Activated T-helper 2 cell treated with anti-CD3 and anti-CD28 coated beads, Interferon-gamma antibody, Interleukin-2, Interleukin-4, amounts not matched to agents 10 μg/mL and 5 μg/mL and 100 μg/mL, durations not matched to agents 14 hours and 24 hours and 36 hours (primary cell): ENCODE measurements at regions of chr7 and their contacts with region 1.

Region 1: GRCh38 chr7:93245525-93246432 is 13.6 kb downstream of the VPS50 start:
- DNase-seq: no peak
- H3K4me3 Mint-ChIP-seq: no peak overlapping the region
- H3K27ac Mint-ChIP-seq: no peak overlapping the region
- H3K4me1 Mint-ChIP-seq: no peaks in the 10 kb centered on the region
- H3K27me3 Mint-ChIP-seq: no peaks in the 10 kb centered on the region

Region 2: DNA sequence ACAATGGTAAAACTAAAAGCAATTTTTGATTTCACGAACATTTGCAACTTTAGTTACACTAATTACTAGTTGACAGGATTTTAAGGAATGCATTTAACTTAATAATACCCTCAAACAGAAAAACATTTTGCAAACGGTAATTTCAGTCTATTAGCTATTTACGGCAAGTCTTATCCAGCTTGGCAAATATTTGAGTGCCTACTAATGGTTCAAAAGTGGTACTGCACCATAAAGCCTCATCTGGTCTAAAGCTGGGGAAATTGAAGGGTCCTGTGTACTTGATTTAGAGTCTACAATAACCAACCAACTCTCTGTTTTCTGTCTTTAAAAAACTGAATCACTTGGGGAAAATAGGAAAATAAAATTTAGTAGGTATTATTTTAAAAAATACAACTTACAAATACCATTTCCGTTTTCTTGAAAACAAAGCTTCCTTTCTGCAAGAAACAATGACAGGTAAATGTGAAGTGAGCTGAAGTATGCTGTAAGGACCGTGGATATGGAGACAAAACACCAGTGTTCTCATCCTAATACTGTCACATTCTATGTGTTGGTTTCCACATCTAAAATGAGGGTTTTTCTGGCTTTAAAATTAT is 128.7 kb after region 1 on chr7:
- intact Hi-C with region 1: loop called (anchors 5 kb)
- DNase-seq: no peak
- H3K4me3 Mint-ChIP-seq: no peak overlapping the region
- H3K27ac Mint-ChIP-seq: no peak overlapping the region
- H3K4me1 Mint-ChIP-seq: no peaks in the 10 kb centered on the region
- H3K27me3 Mint-ChIP-seq: peaks cover 16% of the 10 kb centered on the region

Region 3: GRCh38 chr7:93390660-93391059 is 144.9 kb after region 1 on chr7:
- intact Hi-C with region 1: no loop called
- DNase-seq: no peak
- H3K4me3 Mint-ChIP-seq: no peak overlapping the region
- H3K27ac Mint-ChIP-seq: no peak overlapping the region
- H3K4me1 Mint-ChIP-seq: peaks cover 7% of the 10 kb centered on the region
- H3K27me3 Mint-ChIP-seq: peaks cover 10% of the 10 kb centered on the region

Region 4: GRCh38 chr7:93442478-93443224 is 196.9 kb after region 1 on chr7:
- intact Hi-C with region 1: loop called (anchors 5 kb)
- DNase-seq: peak; percentile 14
- H3K4me3 Mint-ChIP-seq: no peak overlapping the region
- H3K27ac Mint-ChIP-seq: no peak overlapping the region
- H3K4me1 Mint-ChIP-seq: no peaks in the 10 kb centered on the region
- H3K27me3 Mint-ChIP-seq: no peaks in the 10 kb centered on the region

Region 5: DNA sequence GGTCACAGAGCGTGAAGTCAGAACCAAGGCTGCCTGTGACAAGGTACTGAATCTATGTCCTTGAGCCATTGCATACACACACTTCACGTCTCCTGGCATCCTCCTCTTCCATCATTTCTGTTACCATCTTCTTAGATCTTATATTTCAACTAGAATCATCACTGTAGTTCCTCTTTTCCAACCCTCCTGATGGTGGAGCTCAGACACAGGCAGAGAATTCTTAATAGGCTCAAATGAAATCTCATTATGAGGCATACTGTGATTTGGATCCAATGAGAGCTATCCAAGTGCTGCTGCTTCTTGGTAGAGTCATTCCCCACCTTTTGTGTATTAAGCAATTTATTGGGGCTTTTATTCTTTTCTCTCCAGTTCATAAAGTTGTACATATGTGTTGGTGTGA is 215.6 kb after region 1 on chr7:
- intact Hi-C with region 1: no loop called
- DNase-seq: no peak
- H3K4me3 Mint-ChIP-seq: no peak overlapping the region
- H3K27ac Mint-ChIP-seq: no peak overlapping the region
- H3K4me1 Mint-ChIP-seq: no peaks in the 10 kb centered on the region
- H3K27me3 Mint-ChIP-seq: no peaks in the 10 kb centered on the region

Region 6: DNA sequence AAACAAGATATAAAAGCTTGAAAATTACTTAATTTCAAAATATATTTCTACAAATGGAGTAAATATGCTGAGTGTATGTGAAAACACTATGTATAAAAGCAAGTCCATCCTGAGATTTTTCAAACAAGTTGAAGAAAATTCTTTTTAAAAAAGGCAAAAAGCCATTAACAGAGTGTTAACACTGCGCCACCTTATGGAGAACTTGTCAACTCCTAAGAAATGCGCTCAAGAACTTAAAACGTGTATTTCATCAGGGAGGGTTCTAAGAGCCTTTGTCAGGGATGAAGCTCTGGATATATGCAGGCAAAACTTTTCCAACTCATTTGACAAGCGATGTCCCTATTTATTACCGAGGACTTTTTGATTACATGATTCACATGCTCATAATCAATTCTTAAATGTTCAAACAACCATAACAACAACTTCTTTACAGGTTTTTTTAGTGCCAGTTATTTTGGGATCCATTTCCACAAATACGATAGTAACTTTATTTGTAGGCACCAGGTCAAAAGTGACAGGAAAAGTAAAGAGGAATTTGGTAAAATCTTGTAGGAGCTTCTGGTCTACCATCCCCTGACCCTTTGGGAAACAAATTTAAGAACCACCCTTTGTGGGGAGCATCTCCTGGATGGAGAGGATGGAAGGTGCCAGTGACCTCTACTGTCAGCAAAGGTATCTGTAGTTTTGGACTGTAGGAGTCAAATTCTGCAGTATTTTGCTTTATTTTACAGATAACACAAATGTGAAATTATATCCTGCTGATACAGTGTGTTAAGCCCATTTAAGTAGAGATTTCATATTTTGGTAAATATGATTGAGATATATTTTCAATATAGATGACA is 305.5 kb after region 1 on chr7:
- intact Hi-C with region 1: loop called (anchors 1 kb)
- DNase-seq: no peak
- H3K4me3 Mint-ChIP-seq: no peak overlapping the region
- H3K27ac Mint-ChIP-seq: no peak overlapping the region
- H3K4me1 Mint-ChIP-seq: no peaks in the 10 kb centered on the region
- H3K27me3 Mint-ChIP-seq: no peaks in the 10 kb centered on the region

Region 7: DNA sequence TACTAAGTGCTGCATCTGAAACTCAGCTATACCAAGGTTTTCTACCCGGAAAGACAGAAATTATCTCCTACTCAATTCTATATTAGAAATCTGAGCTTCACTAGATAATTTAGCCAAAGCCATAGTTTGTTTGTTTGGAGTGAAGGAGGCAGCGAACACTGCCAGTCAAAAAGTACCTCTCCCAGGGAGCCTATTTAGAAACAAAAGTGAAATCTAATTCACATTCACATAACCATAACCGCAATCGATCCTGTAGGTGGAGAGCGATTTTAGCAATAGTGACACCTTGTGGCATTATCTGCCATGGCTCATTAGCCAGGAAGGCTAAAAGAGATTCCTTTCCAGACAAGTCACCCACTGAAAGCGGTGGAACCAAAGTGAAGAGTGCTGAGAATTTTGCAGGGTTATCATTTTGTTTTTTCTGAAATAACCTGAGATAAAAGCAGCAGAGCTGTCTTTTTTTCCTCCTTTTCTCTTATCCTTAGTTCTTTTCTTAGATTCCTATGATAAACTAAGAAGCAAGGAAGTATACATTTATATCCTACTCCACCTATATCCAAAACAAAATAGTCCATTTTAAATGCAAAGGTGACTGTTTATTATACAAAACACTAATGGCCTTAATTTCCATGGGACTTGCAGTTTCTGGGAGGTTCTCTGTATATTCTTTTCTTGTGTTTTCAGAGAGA is 842.0 kb after region 1 on chr7:
- intact Hi-C with region 1: loop called (anchors 10 kb)
- DNase-seq: peak; percentile 34
- H3K4me3 Mint-ChIP-seq: peak overlapping the region; percentile 37
- H3K27ac Mint-ChIP-seq: no peak overlapping the region
- H3K4me1 Mint-ChIP-seq: peaks cover 6% of the 10 kb centered on the region
- H3K27me3 Mint-ChIP-seq: peaks cover 41% of the 10 kb centered on the region